ENCODE measurements at regions of chr18 and their contacts with region 1.

Region 1: DNA sequence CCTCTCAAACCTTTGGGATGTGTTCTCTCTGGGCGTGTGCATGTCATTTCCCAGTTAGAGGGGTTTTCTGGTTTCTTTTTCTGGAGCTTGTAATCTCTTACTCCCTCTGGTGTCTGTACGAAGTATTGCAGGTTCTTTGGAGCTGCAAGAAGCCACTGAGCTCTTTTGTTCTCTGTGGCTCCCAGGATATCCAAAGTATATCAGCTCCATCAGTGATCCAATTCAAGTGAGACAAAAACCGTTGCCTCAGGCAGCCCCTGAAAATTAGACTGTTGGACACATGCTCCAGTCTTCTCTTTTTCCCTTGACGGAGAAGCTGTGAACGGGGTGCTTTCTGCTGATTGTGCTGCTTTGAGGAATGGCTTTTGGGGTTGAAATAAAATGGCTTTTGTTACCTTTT is 59.0 kb upstream of the LDLRAD4 start:
- DNase-seq: peak; percentile 34
- H3K4me3 Mint-ChIP-seq: no peak overlapping the region
- H3K27ac Mint-ChIP-seq: no peak overlapping the region
- H3K4me1 Mint-ChIP-seq: peaks cover 3% of the 10 kb centered on the region
- H3K27me3 Mint-ChIP-seq: no peaks in the 10 kb centered on the region

Region 2: DNA sequence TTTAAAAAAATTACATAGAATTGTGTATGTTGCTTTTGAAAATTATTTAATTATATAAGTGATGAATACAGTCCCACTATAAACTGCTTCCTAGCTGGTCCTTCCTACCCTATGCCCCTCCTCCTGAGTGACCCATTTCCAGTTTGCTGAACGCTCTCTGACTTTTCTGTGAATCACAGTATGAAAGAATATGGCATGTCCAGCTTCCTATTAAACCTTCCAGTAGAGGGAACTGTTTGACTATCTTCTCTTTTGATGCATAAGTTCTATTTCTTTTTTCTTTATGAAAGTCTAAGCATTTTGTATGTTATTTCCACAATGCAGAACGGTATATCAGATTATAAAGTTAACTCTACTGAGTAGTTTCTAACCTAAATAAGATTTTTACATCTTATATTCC is 415.5 kb before region 1 on chr18:
- CTCF ChIA-PET with region 1: interaction called, 4 read pairs
- intact Hi-C with region 1: loop called (anchors 1 kb)
- DNase-seq: no peak
- H3K4me3 Mint-ChIP-seq: no peak overlapping the region
- H3K27ac Mint-ChIP-seq: no peak overlapping the region
- H3K4me1 Mint-ChIP-seq: no peaks in the 10 kb centered on the region
- H3K27me3 Mint-ChIP-seq: no peaks in the 10 kb centered on the region

Region 3: GRCh38 chr18:12960395-12960794 is 199.2 kb before region 1 on chr18:
- CTCF ChIA-PET with region 1: no interaction called
- intact Hi-C with region 1: no loop called
- DNase-seq: no peak
- H3K4me3 Mint-ChIP-seq: no peak overlapping the region
- H3K27ac Mint-ChIP-seq: no peak overlapping the region
- H3K4me1 Mint-ChIP-seq: peaks cover 9% of the 10 kb centered on the region
- H3K27me3 Mint-ChIP-seq: no peaks in the 10 kb centered on the region

Region 4: DNA sequence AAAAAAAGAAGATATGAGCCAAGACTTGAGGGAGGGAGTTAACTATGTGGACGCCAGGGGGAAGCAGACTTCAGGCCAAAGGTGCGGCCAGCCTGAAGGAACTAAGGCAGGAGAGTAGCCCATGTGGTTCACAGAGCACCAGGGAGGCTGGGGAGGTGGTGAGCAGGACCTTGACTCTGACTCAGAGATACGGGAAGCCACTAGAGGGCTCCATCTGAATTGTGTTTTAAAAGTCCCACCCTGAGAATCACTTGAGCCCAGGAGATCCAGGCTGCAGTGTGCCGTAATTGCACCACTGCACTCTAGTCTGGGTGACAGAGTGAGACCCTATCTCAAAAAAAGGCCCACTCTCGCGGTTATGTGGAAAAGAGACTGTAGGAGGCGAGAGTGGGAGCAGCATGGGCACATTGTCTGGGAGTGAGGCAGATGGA is 156.1 kb before region 1 on chr18:
- CTCF ChIA-PET with region 1: interaction called, 6 read pairs
- intact Hi-C with region 1: loop called (anchors 1 kb)
- DNase-seq: peak; percentile 37
- H3K4me3 Mint-ChIP-seq: no peak overlapping the region
- H3K27ac Mint-ChIP-seq: no peak overlapping the region
- H3K4me1 Mint-ChIP-seq: peaks cover 16% of the 10 kb centered on the region
- H3K27me3 Mint-ChIP-seq: no peaks in the 10 kb centered on the region

Region 5: GRCh38 chr18:13067124-13067523 is 92.5 kb before region 1 on chr18:
- CTCF ChIA-PET with region 1: no interaction called
- intact Hi-C with region 1: no loop called
- DNase-seq: peak; percentile 56
- H3K4me3 Mint-ChIP-seq: no peak overlapping the region
- H3K27ac Mint-ChIP-seq: peak overlapping the region; percentile 37
- H3K4me1 Mint-ChIP-seq: peaks cover 26% of the 10 kb centered on the region
- H3K27me3 Mint-ChIP-seq: no peaks in the 10 kb centered on the region

Region 6: DNA sequence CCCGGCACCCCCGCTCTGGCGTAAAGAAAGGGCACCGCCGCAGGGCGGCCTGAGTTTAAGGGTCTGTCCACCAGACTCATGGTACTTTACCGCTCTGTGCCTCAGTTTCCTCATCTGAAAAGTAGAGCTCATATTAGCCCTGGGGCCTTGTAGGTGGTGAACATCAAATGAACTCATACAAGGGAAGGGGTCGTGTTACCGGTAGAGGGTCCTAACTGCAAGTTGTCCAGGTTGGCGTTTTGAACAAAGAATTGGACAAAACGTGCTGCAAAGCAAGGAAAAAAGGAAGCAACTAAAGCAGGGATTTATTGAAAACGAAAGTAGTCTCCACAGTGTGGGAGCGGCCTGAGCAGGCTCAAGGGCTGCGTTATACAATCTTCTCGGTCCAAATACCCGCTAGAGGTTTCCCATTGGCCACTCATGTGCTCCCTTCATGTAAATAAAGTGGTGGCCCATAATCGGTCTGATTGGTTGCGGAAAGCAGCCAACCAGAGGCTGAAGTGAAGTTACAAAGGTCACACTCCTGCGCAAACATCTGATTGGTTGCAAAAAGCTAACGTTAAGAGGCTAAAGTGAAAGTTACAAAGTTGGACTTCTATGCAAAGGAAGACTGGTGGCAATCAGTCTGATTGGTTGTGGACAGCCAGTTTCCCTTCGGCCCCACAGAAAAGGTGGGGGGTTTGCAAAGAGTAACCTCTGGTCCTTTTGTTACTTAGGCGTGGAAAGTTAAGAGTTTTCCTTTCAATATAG is 21.7 kb before region 1 on chr18:
- CTCF ChIA-PET with region 1: interaction called, 12 read pairs
- intact Hi-C with region 1: loop called (anchors 1 kb)
- DNase-seq: peak; percentile 74
- H3K4me3 Mint-ChIP-seq: peak overlapping the region; percentile 96
- H3K27ac Mint-ChIP-seq: peak overlapping the region; percentile 75
- H3K4me1 Mint-ChIP-seq: peaks cover 24% of the 10 kb centered on the region
- H3K27me3 Mint-ChIP-seq: no peaks in the 10 kb centered on the region

Measured in activated naive CD4-positive, alpha-beta T cell treated with anti-CD3 and anti-CD28 coated beads for 36 hours (primary cell).